ENCODE measurements at regions of chr5 and their contacts with region 1.

Region 1: GRCh38 chr5:132639706-132640130 is 18.3 kb upstream of the IL13 start:
- DNase-seq: no peak
- H3K4me3 Mint-ChIP-seq: peak overlapping the region; percentile 30
- H3K27ac Mint-ChIP-seq: peak overlapping the region; percentile 86
- H3K4me1 Mint-ChIP-seq: peaks cover 83% of the 10 kb centered on the region
- H3K27me3 Mint-ChIP-seq: no peaks in the 10 kb centered on the region

Region 2: DNA sequence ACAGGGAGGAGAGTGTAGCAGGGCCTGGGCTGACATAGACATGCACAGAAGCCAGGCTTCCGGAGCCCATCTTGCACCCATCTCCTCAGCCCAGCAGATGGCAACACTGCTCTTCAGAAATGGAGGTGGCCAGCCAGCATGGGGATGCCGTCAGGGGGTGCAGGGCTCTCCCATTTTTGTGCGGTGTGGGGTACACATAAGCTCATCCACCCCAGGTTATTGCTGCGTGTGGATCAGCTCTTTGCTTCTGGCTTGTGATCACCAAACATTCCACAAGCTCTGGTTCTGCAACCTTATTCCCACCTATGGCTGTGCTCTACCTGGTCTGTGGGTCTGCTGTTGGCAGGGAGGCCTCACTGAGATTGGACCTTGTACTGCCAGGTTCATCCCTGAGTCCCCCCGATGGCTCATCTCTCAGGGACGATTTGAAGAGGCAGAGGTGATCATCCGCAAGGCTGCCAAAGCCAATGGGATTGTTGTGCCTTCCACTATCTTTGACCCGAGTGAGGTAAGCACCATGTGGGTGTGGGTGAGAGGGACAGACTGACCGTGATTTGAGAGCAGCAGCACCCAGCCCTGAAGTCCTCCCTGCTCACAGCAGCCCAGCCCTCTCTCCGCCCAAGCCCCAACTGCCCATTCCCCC is 253.0 kb before region 1 on chr5:
- intact Hi-C with region 1: loop called (anchors 1 kb)
- DNase-seq: peak; percentile 72
- H3K4me3 Mint-ChIP-seq: no peak overlapping the region
- H3K27ac Mint-ChIP-seq: peak overlapping the region; percentile 54
- H3K4me1 Mint-ChIP-seq: peaks cover 61% of the 10 kb centered on the region
- H3K27me3 Mint-ChIP-seq: peaks cover 3% of the 10 kb centered on the region

Region 3: DNA sequence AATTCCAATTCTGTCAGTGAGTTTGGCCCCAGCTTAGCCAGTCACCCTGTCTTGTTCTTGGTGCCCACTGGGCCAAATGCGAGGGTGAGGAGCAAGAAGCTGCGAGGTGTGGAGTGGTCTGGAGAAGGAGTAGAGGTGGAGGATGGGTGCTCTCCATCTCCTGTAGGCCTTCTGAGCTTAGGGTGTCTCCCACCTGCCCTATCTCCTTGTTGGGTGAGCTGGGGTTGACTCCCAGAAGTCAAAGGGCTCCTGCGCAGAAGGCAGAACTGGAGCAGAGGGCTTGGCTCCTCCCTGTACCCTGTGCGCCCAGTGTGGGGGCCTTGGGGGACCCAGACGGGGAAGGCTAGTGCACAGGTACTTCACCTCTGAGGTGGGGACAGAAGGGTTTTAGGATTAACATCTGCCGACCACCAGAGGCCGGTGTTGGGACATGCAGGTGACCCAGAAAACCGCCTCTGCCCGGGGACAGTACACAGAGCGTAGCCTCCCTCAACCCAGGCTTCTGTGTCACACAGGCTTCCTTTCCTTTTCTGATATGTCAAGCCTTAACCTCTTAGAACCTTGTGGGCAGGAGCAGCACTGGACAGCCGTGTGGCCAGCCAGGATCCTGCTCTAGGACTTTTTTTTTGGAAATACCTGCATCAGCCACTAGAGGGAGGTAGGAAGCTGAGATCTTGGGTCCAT is 113.3 kb before region 1 on chr5:
- intact Hi-C with region 1: loop called (anchors 1 kb)
- DNase-seq: peak; percentile 48
- H3K4me3 Mint-ChIP-seq: no peak overlapping the region
- H3K27ac Mint-ChIP-seq: peak overlapping the region; percentile 26
- H3K4me1 Mint-ChIP-seq: peaks cover 64% of the 10 kb centered on the region
- H3K27me3 Mint-ChIP-seq: peaks cover under 1% of the 10 kb centered on the region

Region 4: GRCh38 chr5:132622608-132623007 is 17.1 kb before region 1 on chr5:
- intact Hi-C with region 1: loop called (anchors 1 kb)
- DNase-seq: no peak
- H3K4me3 Mint-ChIP-seq: no peak overlapping the region
- H3K27ac Mint-ChIP-seq: peak overlapping the region; percentile 16
- H3K4me1 Mint-ChIP-seq: peaks cover 24% of the 10 kb centered on the region
- H3K27me3 Mint-ChIP-seq: no peaks in the 10 kb centered on the region

Region 5: GRCh38 chr5:132688536-132689339 is 49.0 kb after region 1 on chr5:
- intact Hi-C with region 1: loop called (anchors 2 kb)
- DNase-seq: no peak
- H3K4me3 Mint-ChIP-seq: no peak overlapping the region
- H3K27ac Mint-ChIP-seq: peak overlapping the region; percentile 70
- H3K4me1 Mint-ChIP-seq: peaks cover 42% of the 10 kb centered on the region
- H3K27me3 Mint-ChIP-seq: no peaks in the 10 kb centered on the region

Region 6: DNA sequence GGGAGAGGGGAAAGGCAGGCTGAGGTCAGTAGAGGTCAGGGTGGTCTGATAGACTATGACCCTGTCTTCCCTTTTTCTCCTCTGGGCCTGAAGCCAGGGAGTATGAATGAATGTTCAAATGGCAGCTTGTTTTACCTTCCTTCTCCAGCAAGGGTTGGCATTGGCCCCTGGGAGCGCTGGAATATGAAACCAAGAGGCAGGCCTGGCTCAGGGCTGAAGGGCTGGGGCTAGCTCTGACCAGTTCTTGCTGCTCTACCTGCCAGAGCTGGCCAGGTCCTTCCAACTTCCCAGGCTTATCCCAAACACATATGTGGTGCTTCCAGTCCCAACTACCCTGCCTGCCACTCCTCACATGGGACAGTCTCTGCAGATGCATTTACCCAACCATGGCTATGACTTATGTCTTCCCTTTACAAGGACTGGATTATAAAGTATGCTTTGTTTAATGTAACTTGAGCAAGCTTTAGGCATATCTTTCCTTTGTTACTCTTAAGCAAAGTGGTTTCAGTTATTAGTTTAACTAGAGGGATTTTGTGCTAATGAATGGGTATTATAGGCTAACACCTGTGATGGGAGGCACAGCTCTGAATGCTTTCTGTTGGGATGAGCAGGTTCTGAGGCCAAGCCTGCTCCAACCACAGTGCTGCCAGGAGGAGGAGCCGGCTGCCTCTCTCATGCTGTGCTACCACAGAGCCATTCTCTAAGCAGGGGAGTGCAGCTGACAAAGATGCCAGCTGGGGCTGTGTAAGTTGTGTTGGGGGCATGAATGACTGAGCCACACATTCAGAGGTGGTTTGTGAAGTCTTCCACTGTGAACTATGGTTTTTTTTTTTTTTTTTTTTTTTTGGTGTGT is 113.6 kb after region 1 on chr5:
- intact Hi-C with region 1: loop called (anchors 1 kb)
- DNase-seq: no peak
- H3K4me3 Mint-ChIP-seq: peak overlapping the region; percentile 35
- H3K27ac Mint-ChIP-seq: peak overlapping the region; percentile 90
- H3K4me1 Mint-ChIP-seq: peaks cover 72% of the 10 kb centered on the region
- H3K27me3 Mint-ChIP-seq: peaks cover 3% of the 10 kb centered on the region

Region 7: DNA sequence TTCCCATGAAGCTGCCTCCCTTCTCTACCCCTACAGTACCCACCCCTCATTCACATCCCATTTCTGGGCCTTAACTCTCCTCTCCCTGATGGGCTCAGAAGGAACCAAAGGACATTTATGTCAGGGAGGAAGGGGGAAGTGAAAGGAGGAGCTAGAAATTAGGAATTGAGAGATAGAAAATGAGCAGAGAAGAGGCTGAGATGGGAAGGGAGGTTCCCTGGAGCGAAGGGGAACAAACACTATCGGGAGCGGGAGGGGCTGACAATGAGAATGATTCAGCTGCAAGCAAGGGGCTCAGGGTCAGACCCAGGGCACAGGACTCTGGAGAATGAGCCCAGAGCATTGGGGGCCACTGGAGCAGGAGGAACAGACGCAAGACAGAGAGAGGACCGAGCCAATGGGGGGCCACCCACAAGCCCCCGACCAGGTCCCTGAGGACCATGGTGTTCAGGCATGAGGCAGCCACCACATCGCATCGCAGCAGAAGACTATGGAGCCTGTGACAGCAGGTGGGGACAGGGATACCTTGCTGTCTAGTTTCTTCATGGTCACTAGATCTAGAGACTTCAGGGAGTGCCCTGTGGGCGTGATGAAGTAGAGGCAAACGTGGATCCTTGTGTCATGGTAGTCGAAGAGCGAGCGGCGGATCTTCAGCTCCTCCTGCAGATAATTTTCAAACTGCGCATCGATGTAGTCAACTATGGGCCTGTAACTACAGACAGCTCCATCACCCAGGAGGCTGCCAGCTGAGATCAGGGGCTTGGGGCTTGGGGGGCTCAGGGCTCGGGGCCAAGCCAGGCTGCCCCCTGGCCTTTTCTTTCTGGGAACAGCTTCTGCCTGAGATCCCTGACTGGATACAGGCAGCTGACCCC is 123.7 kb after region 1 on chr5:
- intact Hi-C with region 1: no loop called
- DNase-seq: no peak
- H3K4me3 Mint-ChIP-seq: no peak overlapping the region
- H3K27ac Mint-ChIP-seq: peak overlapping the region; percentile 27
- H3K4me1 Mint-ChIP-seq: no peaks in the 10 kb centered on the region
- H3K27me3 Mint-ChIP-seq: no peaks in the 10 kb centered on the region

Measured in activated T-helper 1 cell treated with anti-CD3 and anti-CD28 coated beads, Interleukin-12 subunit alpha, Interleukin-12 subunit beta, Interleukin-2, Interleukin-4 antibody, amounts not matched to agents 30 ng/mL and 10 ng/mL and 1 ng/mL, durations not matched to agents 14 hours and 24 hours and 36 hours (primary cell).